ENCODE measurements at regions of chr1 and their contacts with region 1.

Region 1: DNA sequence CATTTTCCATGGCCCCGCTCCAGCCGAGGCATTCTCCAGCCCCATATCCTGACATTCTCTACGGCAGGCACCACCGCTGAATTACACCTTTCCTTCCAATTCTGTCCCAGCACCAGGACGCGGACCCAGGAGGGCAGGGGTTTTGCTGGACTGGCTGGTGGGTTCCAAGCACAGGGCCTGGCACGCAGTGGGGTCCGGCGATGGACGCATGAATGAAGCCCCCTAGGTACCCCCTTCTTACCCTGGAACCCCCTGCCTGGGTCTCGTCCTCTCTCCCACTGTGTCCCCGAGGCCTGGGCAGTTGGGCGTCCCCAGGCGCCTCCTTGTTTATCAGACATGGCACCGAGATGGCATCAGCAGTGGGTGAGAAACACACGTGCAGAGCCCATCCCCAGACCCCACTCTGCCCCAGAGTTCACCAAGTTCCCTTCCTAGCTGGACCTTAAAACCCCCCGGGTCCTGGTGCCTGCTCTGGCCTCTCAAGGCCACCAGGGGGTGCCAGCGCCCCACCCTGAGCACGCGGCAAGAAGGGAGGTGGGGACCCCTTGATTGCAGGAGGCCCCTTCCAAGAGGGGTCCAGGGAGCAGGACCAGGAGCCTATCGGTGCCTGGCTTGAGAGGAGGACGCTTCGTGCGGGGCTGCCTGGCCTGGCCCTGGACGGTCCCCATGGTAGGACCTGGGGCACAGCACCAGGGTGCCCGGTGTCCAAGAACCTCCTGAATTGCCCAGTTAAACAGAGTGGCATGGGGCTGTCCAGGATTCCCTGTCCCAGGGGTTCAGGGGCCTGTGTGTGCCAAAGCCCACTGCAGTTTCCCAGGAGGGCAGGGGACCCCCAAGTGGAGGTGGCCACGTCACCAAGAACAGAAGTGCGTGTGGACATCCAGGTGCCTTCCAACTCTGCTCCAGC is 46.1 kb downstream of the MEGF6 start:
- DNase-seq: no peak

Region 2: DNA sequence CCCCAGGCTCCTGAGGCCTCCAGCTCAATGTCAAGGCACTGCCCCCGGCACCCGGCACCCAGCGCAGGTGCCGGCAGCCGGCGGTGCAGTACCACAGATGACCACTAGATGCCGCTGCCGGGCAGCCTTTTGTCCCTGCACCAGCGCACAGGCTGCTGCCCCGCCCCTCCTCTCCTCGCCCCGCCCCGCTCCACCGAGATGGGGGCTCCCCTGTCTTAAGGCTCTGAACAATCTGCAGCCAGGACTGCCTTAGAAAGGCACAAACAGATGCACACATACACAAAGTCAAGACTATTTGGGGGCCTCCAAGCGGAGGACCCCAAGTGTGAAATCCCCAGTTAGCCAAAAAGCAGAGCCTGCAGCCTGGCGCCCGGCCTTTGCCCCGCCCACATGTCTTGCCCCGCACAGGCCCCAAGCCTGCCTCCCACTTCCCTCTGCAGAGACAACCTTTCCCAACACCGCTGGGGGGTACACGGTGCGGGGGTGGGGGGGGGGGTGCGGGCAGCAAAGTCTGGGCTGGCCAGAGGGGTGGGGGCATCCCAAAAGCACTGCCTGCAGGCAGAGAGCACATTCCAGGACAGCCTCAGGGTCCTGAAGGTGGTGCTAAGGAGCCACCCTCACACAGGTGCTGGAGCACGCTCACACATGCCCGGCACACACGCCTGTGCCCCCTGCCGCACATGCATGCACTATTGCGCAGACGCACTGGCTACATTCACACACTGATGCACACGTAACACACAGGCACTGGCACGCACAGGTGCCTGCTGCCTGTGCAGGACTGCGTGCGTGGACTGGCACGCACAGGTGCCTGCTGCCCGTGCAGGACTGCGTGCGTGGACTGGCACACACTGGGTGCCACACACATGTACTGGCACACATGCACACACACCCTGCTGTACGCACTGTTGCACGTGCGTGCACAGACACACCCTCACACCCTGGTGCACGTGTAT is 73.6 kb before region 1 on chr1:
- intact Hi-C with region 1: loop called in 1 of 2 experiments (anchors 10 kb)
- DNase-seq: peak; percentile 93

Region 3: GRCh38 chr1:3618881-3619671 is 53.9 kb after region 1 on chr1:
- intact Hi-C with region 1: loop called (anchors 2 to 5 kb)
- DNase-seq: peak; percentile 89

Region 4: DNA sequence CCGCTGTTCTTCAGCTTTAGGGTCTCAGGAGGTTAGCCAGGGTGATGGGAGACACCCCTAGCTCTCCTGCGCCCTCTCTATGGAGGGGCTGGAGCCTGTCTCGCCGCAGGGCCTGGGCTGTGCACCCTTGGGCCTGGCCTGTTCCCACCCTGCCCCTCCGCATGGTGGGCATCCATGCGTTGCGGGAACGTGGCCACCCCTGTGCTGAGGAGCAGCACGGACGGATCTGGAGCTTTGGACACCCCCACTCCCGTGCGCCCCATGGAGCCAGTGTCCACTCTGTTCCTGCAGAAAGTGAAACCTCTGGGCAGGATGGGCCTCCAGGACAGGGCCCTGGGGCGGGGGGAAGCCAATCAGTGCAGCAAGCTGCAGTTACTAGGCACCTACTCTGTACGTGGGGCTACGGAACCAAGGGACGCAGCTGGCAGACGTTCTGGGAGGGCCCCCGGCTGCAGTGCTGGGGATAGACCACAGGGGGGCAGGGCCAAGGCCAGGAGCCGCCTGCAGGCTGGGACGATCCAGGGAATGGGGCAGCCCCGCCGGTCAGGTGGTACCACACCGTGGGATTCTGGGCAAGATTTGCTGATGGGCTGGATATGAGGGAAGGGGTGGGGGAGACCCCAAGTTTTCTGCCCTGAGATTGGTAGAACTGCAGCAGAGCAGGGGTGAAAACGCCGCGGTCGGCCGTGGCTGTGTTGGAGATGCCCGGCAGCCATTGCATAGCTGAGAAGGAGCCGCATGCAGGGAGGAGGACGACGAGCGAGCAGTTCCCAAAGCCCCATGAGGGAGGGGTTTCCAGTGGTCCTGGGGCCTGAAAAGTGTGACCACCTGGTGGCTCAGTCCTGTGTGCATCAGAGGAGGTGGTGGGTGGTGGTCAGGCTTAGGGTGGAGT is 130.4 kb after region 1 on chr1:
- intact Hi-C with region 1: no loop called
- DNase-seq: no peak

Region 5: GRCh38 chr1:3727042-3727824 is 162.1 kb after region 1 on chr1:
- intact Hi-C with region 1: loop called in 1 of 2 experiments (anchors 10 kb)
- DNase-seq: no peak